GM23248 (cell line): ENCODE measurements at regions of chr11 and their contacts with region 1.

Region 1: GRCh38 chr11:46315033-46315738 is 32.1 kb upstream of the DGKZ start:
- DNase-seq: peak; percentile 84
- H3K4me3 ChIP-seq: no peak overlapping the region
- H3K27ac ChIP-seq: no peak overlapping the region
- H3K4me1 ChIP-seq: no peaks in the 10 kb centered on the region
- H3K27me3 ChIP-seq: no peaks in the 10 kb centered on the region

Region 2: GRCh38 chr11:46134540-46134939 is 180.6 kb before region 1 on chr11:
- in situ Hi-C with region 1: loop called (anchors 10 kb)
- DNase-seq: no peak
- H3K4me3 ChIP-seq: no peak overlapping the region
- H3K27ac ChIP-seq: no peak overlapping the region
- H3K4me1 ChIP-seq: no peaks in the 10 kb centered on the region
- H3K27me3 ChIP-seq: peaks cover 8% of the 10 kb centered on the region

Region 3: DNA sequence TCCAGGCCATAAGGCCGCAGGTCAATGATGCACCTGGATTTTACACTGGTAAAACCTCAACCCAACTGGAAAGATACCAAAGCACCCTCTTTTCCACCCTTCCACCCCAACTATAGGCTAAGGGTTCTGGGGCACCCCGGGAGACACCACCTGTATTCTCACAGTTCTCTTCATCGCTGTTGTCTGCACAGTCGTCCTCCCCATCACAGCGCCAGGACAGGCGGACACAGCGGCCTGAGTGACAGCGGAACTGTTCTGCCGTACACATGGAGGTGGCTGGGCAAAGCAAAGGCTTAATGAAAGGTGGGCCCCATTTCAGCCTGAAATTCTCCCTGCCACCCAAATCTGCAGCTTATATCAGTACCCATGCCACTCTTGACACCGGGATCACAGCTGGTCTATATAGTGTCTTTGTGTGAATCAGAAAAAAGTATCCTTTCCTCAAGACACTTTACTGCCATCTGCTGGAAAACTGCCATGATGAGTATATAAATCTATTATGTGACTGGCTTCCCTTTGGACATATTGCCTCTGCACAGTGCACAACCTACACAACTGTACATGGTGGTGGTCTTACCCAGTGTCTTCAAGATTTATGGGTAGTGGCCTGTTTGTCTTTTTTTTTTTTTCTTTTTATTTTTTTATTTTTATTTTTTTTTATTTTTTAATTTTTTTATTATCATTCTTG is 581.7 kb after region 1 on chr11:
- in situ Hi-C with region 1: no loop called
- DNase-seq: peak; percentile 73
- H3K4me3 ChIP-seq: no peak overlapping the region
- H3K27ac ChIP-seq: no peak overlapping the region
- H3K4me1 ChIP-seq: no peaks in the 10 kb centered on the region
- H3K27me3 ChIP-seq: no peaks in the 10 kb centered on the region